ENCODE measurements at regions of chr6 and their contacts with region 1.

Region 1: GRCh38 chr6:151765444-151765886 is 42.0 kb upstream of the ESR1 start:
- DNase-seq: no peak
- ATAC-seq: peak; percentile 52
- H3K4me3 Mint-ChIP-seq: no peak overlapping the region
- H3K27ac Mint-ChIP-seq: no peak overlapping the region
- H3K4me1 Mint-ChIP-seq: peaks cover 26% of the 10 kb centered on the region
- H3K27me3 Mint-ChIP-seq: no peaks in the 10 kb centered on the region
- CTCF ChIP-seq: peak; percentile 26

Region 2: GRCh38 chr6:151702851-151703611 is 62.4 kb before region 1 on chr6:
- CTCF ChIA-PET with region 1: interaction called, 5 read pairs
- POLR2A ChIA-PET with region 1: interaction called, 3 read pairs
- intact Hi-C with region 1: loop called (anchors 2 kb)
- DNase-seq: no peak
- ATAC-seq: peak; percentile 49
- H3K4me3 Mint-ChIP-seq: peak overlapping the region; percentile 60
- H3K27ac Mint-ChIP-seq: peak overlapping the region; percentile 82
- H3K4me1 Mint-ChIP-seq: peaks cover 46% of the 10 kb centered on the region
- H3K27me3 Mint-ChIP-seq: no peaks in the 10 kb centered on the region
- CTCF ChIP-seq: no peak

Region 3: GRCh38 chr6:151807533-151808370 is 42.3 kb after region 1 on chr6 and contains the start of gene ESR1:
- CTCF ChIA-PET with region 1: interaction called, 12 read pairs
- POLR2A ChIA-PET with region 1: no interaction called
- intact Hi-C with region 1: loop called (anchors 2 kb)
- DNase-seq: peak; percentile 32
- ATAC-seq: peak; percentile 79
- H3K4me3 Mint-ChIP-seq: peak within 1 kb of the TSS; percentile 84
- H3K27ac Mint-ChIP-seq: no peak within 1 kb of the TSS
- H3K4me1 Mint-ChIP-seq: peaks cover 17% of the 10 kb centered on the region
- H3K27me3 Mint-ChIP-seq: peaks cover 33% of the 10 kb centered on the region
- CTCF ChIP-seq: no peak
- total RNA-seq, gene ESR1: 10.9 and 17.5 TPM in 2 replicates

Region 4: GRCh38 chr6:152124429-152125074 is 359.1 kb after region 1 on chr6:
- CTCF ChIA-PET with region 1: interaction called, 69 read pairs
- POLR2A ChIA-PET with region 1: interaction called, 8 read pairs
- intact Hi-C with region 1: loop called (anchors 1 kb)
- DNase-seq: no peak
- ATAC-seq: peak; percentile 74
- H3K4me3 Mint-ChIP-seq: no peak overlapping the region
- H3K27ac Mint-ChIP-seq: no peak overlapping the region
- H3K4me1 Mint-ChIP-seq: no peaks in the 10 kb centered on the region
- H3K27me3 Mint-ChIP-seq: no peaks in the 10 kb centered on the region
- CTCF ChIP-seq: peak; percentile 42

Region 5: DNA sequence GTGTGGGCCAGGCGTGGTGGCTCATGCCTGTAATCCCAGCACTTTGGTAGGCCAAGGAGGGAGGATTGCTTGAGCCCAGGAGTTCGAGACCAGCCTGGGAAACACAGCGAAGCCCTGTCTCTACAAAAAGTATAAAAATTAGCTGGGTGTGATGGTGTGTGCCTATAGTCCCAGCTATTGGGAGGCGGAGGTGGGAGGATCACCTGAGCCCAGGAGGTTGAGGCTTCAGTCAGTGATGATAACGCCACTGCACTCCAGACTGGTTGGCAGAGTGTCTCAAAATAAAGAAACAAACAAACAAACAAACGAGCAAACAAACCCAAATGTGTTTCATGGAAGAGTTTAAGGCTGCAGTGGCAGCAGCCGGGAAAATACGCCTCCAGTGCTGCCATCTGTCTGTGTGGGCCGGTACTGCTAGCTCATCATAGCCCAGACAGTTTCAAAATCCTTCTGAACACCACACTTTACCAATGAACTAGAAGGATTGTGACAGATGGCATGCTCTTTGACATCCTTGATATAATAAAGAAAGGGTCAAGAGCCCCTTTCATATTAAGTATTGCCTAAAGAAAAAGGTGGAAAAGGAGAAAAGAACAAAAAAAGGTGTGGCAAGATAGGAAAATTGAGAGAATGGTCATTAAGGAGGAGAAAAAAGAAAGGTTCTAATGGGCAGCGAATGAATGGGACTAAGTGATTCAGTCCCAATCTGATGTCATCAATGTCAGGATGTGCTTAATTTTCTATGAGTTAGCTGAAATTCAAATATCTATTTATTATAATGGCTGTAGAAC is 573.1 kb after region 1 on chr6:
- CTCF ChIA-PET with region 1: no interaction called
- POLR2A ChIA-PET with region 1: no interaction called
- intact Hi-C with region 1: loop called (anchors 10 kb)
- DNase-seq: peak; percentile 40
- ATAC-seq: peak; percentile 71
- H3K4me3 Mint-ChIP-seq: no peak overlapping the region
- H3K27ac Mint-ChIP-seq: no peak overlapping the region
- H3K4me1 Mint-ChIP-seq: peaks cover 2% of the 10 kb centered on the region
- H3K27me3 Mint-ChIP-seq: no peaks in the 10 kb centered on the region
- CTCF ChIP-seq: peak; percentile 57

Region 6: GRCh38 chr6:152458648-152459644 is 693.5 kb after region 1 on chr6:
- CTCF ChIA-PET with region 1: no interaction called
- POLR2A ChIA-PET with region 1: no interaction called
- intact Hi-C with region 1: no loop called
- DNase-seq: no peak
- ATAC-seq: no peak
- H3K4me3 Mint-ChIP-seq: no peak overlapping the region
- H3K27ac Mint-ChIP-seq: no peak overlapping the region
- H3K4me1 Mint-ChIP-seq: peaks cover 7% of the 10 kb centered on the region
- H3K27me3 Mint-ChIP-seq: peaks cover 2% of the 10 kb centered on the region
- CTCF ChIP-seq: no peak